Left cardiac atrium (tissue), 4 donors: ENCODE measurements at regions of chr11 and their contacts with region 1.

Region 1: DNA sequence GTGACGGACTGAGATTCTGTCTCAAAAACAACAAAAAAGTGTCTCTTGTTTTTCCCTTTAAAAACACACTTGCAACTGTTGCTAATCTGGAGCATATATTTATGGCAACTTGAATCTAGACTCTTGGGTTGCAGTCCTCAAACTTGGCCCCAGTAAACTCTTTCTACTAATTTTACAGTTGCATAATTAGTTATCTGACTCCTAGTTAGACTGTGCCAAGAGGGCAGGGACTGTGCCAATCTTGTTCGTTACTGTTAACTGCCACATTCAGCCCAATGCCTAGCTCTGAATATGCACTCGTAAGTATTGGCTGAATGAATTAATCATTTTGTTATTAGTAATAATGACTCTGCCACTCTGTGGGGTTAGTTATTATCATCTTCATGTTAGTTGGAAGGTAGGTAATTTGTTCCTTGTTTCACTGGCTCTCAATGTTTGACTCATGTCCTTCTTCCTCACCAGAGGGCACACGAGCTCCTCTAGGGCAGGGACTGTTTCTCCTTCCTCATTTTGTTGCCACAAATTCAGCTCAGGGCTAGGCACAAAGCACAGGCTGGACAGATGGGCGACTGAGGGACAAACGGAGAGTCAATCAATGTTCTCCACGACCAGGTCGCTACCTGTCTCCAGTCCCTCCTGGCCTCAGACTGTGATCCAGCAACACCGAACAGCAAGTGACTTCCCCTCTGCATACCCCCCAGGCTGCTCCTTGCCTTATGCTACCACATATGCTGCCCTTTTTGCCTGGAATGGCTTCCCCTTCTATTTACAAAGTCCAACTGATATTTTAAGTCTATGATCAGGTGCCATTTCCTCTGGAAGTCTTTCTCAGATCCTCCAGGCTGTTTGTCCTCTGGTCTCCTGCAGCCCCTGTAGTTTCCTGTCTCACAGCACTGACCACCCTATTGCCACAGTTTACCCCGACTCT is 9.0 kb downstream of the CLPB start:
- DNase-seq: no peak
- ATAC-seq: peak; percentile 46 to 71

Region 2: DNA sequence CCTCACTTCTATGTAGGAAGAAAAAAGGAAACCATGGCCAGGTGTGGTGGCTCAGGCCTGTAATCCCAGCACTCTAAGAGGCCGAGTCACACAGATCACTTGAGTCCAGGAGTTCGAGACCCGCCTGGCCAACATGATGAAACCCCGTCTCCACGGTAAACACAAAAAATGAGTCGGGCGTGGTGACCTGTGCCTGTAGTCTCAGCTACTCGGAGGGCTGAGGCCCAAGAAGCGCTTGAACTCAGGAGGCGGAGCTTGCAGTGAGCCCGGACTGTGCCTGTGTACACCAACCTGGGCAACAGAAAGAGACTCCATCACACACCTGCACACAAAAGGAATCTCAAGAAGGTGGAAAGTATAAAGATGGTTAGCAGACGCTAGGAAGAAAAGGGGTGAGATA is 529.4 kb before region 1 on chr11:
- intact Hi-C with region 1: no loop called
- DNase-seq: no peak
- ATAC-seq: no peak

Region 3: GRCh38 chr11:72238040-72238450 is 187.3 kb before region 1 on chr11:
- intact Hi-C with region 1: loop called in 1 of 2 experiments (anchors 10 kb)
- DNase-seq: no peak
- ATAC-seq: peak; percentile 29 to 44